Activated B cell treated with CpG ODN at 0.5 μM for 24 hours (primary cell): ENCODE measurements at regions of chr5 and their contacts with region 1.

Region 1: GRCh38 chr5:90866333-90866732 is 307.7 kb downstream of the ADGRV1 start:
- DNase-seq: no peak
- ATAC-seq: peak; percentile 37
- H3K4me3 Mint-ChIP-seq: no peak overlapping the region
- H3K27ac Mint-ChIP-seq: no peak overlapping the region
- H3K4me1 Mint-ChIP-seq: peaks cover 2% of the 10 kb centered on the region
- H3K27me3 Mint-ChIP-seq: no peaks in the 10 kb centered on the region
- CTCF ChIP-seq: no peak

Region 2: DNA sequence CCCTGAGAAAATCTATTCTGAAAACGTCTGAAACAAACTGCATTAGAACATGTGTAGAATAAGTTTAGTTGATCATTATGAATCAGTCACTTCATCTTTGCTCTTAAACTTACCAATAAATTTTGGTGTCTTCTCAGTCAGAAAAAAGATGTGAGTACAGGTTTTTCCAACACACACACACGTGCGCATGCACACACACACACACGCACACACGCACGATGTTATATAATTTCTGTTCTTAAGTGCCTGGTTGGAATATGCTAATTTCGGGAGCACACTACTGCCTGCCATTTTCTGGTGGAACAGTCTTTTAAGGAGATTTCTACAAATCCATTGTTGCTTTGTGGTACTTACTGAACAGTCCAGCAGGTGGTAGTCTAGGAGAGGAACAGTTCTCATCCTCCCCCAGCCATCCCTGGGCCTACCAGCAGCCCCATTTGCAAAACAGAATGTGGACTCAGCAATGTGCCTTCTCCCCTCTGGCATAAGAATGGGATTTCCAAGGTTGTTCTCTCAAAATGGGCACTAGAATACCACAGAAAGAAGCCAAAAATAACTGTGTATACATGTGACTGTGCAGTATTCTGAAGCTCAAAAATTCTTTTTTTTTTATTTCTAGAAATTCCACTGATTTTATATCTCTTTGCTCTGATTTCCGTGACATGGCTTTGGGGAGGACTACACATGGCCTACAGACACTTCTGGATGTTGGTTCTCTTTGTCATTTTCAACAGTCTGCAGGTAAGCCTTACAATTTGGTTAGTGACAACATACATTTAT is 235.5 kb after region 1 on chr5:
- CTCF ChIA-PET with region 1: no interaction called
- POLR2A ChIA-PET with region 1: no interaction called
- intact Hi-C with region 1: loop called (anchors 2 kb)
- DNase-seq: no peak
- ATAC-seq: peak; percentile 92
- H3K4me3 Mint-ChIP-seq: no peak overlapping the region
- H3K27ac Mint-ChIP-seq: no peak overlapping the region
- H3K4me1 Mint-ChIP-seq: no peaks in the 10 kb centered on the region
- H3K27me3 Mint-ChIP-seq: no peaks in the 10 kb centered on the region
- CTCF ChIP-seq: no peak

Region 3: GRCh38 chr5:91641730-91642350 is 775.5 kb after region 1 on chr5:
- CTCF ChIA-PET with region 1: no interaction called
- POLR2A ChIA-PET with region 1: no interaction called
- intact Hi-C with region 1: loop called (anchors 5 kb)
- DNase-seq: no peak
- ATAC-seq: no peak
- H3K4me3 Mint-ChIP-seq: no peak overlapping the region
- H3K27ac Mint-ChIP-seq: no peak overlapping the region
- H3K4me1 Mint-ChIP-seq: no peaks in the 10 kb centered on the region
- H3K27me3 Mint-ChIP-seq: no peaks in the 10 kb centered on the region
- CTCF ChIP-seq: peak; percentile 46